ENCODE measurements at regions of chr4 and their contacts with region 1.

Region 1: GRCh38 chr4:26583865-26584652 is at the start of gene TBC1D19:
- DNase-seq: peak; percentile 86
- H3K4me3 Mint-ChIP-seq: peak within 1 kb of the TSS; percentile 93
- H3K27ac Mint-ChIP-seq: peak within 1 kb of the TSS; percentile 79
- H3K4me1 Mint-ChIP-seq: peaks cover 25% of the 10 kb centered on the region
- H3K27me3 Mint-ChIP-seq: no peaks in the 10 kb centered on the region
- total RNA-seq, gene TBC1D19: 4.5 TPM in 2 replicates

Region 2: DNA sequence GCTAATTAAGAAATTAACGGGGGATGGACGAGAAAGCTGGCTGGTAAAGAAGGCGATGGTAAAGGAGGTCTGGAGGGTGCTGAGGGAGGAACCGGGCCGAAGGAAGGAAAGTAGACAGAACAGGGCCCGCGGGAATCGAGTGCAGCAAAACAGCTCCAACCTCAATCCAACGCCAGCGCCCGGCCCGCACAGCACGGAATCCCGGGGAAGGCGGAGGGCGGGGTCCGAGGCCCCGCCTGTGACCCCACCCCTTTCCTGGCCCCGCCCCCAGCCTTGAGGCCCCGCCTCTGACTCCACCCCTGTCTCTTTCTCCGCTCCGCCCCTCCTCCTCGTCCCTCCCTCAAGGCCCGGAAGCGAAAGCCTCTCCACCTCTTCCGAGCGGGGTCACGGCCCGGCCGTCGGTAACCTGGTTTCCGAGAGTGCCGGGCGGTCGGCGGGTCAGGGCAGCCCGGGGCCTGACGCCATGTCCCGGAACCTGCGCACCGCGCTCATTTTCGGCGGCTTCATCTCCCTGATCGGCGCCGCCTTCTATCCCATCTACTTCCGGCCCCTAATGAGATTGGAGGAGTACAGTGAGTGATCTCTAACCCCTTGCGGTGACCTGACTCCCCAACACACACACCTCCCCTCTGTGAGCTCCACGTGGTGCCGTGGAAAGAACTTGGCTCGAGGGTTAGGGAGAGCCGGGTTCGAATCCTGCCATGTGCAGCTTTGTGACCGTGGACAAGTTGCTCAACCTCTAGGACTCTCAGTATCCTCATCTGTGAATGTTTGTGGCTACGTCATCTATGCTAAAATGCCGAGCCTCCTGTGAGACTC is 670.0 kb before region 1 on chr4 and contains the start of gene SMIM20:
- intact Hi-C with region 1: loop called (anchors 10 kb)
- DNase-seq: peak; percentile 90
- H3K4me3 Mint-ChIP-seq: peak within 1 kb of the TSS; percentile 92
- H3K27ac Mint-ChIP-seq: peak within 1 kb of the TSS; percentile 98
- H3K4me1 Mint-ChIP-seq: peaks cover 21% of the 10 kb centered on the region
- H3K27me3 Mint-ChIP-seq: peaks cover 12% of the 10 kb centered on the region
- total RNA-seq, gene SMIM20: 17.0 and 18.7 TPM in 2 replicates

Region 3: DNA sequence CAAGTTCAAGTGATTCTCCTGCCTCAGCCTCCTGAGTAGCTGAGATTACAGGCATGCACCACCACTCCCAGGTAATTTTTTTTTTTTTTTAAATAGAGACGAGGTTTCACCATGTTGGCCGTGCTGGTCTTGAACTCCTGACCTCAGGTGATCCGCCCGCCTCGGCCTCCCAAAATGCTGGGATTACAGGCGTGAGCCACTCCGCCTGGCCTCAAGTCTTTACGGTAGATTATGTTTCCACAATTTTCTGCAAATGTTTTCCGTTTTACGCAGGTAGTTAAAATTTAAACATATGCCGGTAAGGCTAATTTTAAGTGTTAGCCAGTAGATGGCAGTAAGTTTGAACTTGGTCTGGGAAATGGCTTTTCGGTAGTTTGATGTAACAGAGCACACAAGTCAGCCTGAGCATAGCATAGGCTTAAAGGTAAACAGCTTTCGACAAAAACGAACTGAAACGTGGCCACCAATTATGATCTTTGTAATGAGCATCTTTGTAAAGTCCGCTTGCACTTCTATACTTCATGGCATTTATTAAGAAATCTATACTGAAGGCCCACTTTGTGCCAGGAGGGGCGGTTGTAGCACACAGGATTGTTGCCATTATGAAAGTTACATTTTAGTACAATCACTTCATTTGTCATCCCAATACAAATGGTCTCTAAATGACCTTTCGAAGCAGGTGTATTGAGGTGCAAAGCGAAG is 124.9 kb before region 1 on chr4:
- intact Hi-C with region 1: loop called (anchors 10 kb)
- DNase-seq: no peak
- H3K4me3 Mint-ChIP-seq: no peak overlapping the region
- H3K27ac Mint-ChIP-seq: no peak overlapping the region
- H3K4me1 Mint-ChIP-seq: peaks cover 12% of the 10 kb centered on the region
- H3K27me3 Mint-ChIP-seq: peaks cover 11% of the 10 kb centered on the region

Measured in activated T-helper 2 cell treated with anti-CD3 and anti-CD28 coated beads, Interferon-gamma antibody, Interleukin-2, Interleukin-4, amounts not matched to agents 10 μg/mL and 5 μg/mL and 100 μg/mL, durations not matched to agents 14 hours and 24 hours and 36 hours (primary cell).